HepG2 (cell line): ENCODE measurements at regions of chr1 and their contacts with region 1.

Region 1: GRCh38 chr1:12275369-12275768 is 45.5 kb downstream of the VPS13D start:
- DNase-seq: peak; percentile 6
- ATAC-seq: no peak
- H3K4me3 ChIP-seq: no peak overlapping the region
- H3K27ac ChIP-seq: no peak overlapping the region
- H3K4me1 ChIP-seq: no peaks in the 10 kb centered on the region
- H3K27me3 ChIP-seq: no peaks in the 10 kb centered on the region
- CTCF ChIP-seq: peak; percentile 69
- EP300 ChIP-seq: no peak
- POLR2A ChIP-seq: no peak
- RAD21 ChIP-seq: peak; percentile 36; the same call in 1 of the 2 replicates

Region 2: DNA sequence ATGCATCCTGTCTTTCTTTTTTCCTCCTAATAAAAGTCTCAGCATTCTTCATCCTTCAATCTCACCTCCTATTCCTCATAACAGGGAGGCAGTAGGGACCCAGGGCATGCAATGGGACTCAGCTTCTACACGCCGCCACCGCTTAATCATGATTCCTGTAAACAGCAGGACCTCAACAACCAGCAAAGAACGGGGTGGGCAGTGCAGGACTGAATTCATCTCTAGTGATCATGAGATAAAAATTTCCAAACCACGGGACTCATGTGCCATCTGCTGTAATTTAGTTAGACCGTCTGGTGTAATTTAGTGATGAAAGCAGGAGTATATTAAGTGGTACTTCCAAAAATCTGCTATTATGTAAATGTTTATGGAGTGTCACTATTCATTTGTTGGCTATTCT is 503.5 kb after region 1 on chr1:
- CTCF ChIA-PET with region 1: no interaction called
- POLR2A ChIA-PET with region 1: no interaction called
- in situ Hi-C with region 1: loop called (anchors 10 kb)
- intact Hi-C with region 1: no loop called
- DNase-seq: no peak
- ATAC-seq: no peak
- H3K4me3 ChIP-seq: no peak overlapping the region
- H3K27ac ChIP-seq: no peak overlapping the region
- H3K4me1 ChIP-seq: no peaks in the 10 kb centered on the region
- H3K27me3 ChIP-seq: peaks cover 6 to 43% of the 10 kb centered on the region in 2 experiments
- CTCF ChIP-seq: no peak
- EP300 ChIP-seq: no peak
- POLR2A ChIP-seq: no peak
- RAD21 ChIP-seq: no peak